Testis (tissue), 5 donors: ENCODE measurements at regions of chr12 and their contacts with region 1.

Region 1: DNA sequence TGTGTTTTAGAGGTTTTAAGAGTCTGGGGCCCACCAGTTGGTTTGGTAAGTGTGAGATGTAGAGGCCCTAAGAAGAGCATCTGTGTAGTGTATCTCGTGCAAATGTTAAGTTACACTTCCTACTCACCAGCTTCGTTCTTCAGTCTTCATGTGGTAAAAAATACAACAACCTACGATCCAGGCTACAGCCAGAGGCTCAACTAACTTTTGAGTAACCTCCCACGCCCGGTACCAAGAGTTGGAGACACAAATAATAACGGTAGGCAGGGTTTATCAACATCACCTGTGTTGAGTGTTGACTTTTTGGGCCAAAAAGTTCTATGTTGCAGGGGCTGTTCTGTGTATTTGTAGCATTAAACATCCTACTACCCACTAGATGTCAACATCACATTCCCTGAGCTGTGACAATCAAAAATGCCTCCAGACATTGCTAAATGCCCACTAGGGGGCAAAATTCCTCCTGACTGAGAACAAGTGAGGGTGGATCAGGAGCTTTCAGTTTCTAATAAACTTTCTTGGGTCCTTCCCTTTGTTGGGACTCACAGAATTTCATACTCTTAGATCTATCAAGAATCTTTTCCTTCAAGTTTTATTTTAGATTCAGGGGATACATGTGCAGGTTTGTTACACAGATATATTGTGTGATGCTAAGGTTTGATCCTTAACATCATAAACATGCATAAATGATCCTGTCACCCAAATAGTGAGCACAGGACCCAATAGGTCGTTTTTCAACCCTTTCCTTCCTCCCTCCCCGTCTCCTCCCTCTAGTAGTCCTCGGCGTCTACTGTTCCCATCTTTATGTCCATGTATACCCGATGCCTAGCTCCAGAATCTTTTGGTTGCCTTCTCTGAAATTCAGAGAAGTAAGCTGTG is 94.7 kb downstream of the SLC2A13 start:
- DNase-seq: peak; percentile 75
- H3K4me3 ChIP-seq: no peak overlapping the region
- H3K27ac ChIP-seq: no peak overlapping the region
- H3K4me1 ChIP-seq: no peaks in the 10 kb centered on the region
- H3K27me3 ChIP-seq: no peaks in the 10 kb centered on the region
- CTCF ChIP-seq: peak; percentile 72 to 79 (median 72)
- POLR2A ChIP-seq: no peak

Region 2: GRCh38 chr12:40107098-40107802 is 96.1 kb after region 1 on chr12:
- intact Hi-C with region 1: loop called (anchors 10 kb)
- DNase-seq: peak; percentile 97
- H3K4me3 ChIP-seq: peak overlapping the region; percentile 22 to 40
- H3K27ac ChIP-seq: peak overlapping the region in 1 of 2 donors; percentile 93
- H3K4me1 ChIP-seq: no peaks in the 10 kb centered on the region
- H3K27me3 ChIP-seq: no peaks in the 10 kb centered on the region
- CTCF ChIP-seq: peak; percentile 89 to 99 (median 93)
- POLR2A ChIP-seq: no peak